Common myeloid progenitor, CD34-positive (primary cell): ENCODE measurements at regions of chr20 and their contacts with region 1.

Region 1: DNA sequence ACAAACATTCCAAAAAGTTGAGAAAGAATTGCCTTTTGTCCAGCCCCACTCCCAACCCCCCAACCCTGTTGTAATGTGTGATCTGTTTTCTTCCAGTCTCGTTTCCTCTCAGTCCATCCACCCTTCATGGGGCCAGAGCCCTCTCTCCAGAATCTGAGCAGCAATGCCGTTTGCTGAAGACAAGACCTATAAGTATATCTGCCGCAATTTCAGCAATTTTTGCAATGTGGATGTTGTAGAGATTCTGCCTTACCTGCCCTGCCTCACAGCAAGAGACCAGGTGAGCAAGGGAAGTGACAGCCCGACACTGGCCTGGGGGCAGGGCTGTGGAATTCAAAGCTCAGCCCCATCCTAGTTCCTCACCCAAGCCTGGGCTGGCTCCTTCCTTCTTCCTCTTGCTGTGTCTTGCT is 7.8 kb downstream of the MAVS start:
- DNase-seq: no peak
- H3K4me3 ChIP-seq: no peak overlapping the region
- H3K27ac ChIP-seq: no peak overlapping the region
- H3K4me1 ChIP-seq: peaks cover 0 to 4% (median 0%) of the 10 kb centered on the region in 4 experiments
- H3K27me3 ChIP-seq: no peaks in the 10 kb centered on the region

Region 2: DNA sequence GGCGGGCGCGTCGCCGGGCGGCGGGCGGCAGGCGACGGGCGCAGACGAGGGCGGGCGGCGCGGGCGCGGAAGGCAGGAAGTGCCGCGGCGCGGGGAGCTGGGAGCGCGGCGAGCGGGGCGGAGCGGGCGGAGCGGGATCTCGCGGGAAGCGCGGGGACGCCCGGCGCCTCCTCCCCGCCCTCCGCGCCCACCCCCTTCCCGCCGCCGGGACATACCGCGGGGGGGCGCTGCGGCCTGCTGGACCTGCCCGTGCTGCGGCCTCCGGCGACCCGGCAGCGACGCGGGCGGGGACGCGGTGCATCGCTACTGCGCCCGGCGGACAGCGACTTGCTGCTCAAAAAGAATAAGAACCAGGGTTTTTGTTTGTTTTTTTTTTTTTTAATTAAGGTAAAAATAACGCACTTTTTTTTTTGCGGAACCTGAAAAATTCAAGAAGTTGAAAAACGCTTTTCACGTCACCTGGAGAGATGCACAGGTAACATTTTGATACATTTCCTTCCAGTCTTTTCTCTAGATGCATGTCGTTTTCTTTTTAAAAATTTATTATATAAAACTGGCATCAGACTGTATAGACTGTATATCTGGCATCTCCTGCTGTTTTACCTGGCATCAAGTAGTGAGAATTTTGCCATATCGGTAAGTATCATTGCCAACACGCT is 67.7 kb before region 1 on chr20 and contains the start of gene CENPB:
- CTCF ChIA-PET with region 1: interaction called, 21 read pairs
- POLR2A ChIA-PET with region 1: interaction called, 3 read pairs
- DNase-seq: peak; percentile 87 to 93 (median 93)
- H3K4me3 ChIP-seq: peak within 1 kb of the TSS; percentile 38 to 83 (median 70)
- H3K27ac ChIP-seq: peak within 1 kb of the TSS in 1 of 2 experiments; percentile 54
- H3K4me1 ChIP-seq: peaks cover 7 to 27% (median 22%) of the 10 kb centered on the region in 4 experiments
- H3K27me3 ChIP-seq: no peaks in the 10 kb centered on the region

Region 3: DNA sequence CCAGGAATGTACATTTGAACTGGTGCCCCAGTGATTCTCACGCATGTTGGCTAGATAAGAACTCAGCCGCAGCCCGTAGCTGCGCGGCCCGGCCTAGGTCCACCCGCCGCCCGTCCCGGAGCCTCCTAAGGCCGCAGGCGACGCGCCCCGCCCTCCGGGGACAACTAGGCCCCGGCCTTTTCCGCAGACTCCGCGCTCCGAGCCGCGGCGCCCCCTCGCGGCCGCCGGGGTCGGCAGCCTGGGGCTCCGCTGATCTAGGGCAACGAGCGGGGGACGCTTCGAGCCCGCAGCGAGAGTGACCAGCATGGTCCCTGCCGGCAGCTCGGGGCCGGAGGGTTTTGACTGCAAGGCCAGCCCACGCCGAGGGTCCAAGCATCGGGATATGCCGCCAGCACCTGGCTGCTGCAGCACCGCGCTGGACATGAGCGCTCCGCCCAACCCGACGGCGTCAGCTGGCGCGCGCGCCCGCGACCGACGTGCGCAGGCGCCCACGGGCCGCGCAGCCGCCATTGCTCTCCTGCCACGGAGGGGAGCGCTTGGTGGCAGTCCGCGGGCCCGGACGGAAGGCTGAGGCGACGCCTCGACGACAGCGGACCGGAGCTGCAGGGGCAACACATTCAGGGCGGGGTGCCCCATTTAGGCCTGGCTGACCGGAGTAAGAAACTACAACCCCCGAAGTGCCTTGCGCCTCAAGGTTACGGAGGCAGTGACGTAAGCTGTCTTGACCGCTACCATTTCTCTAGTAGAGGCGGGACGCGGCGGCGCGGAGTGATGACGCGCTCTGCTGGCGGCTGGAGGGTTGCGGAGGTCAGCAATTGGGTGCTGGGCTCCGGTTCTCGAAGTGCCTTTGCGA is 34.2 kb before region 1 on chr20 and contains the start of gene AP5S1:
- CTCF ChIA-PET with region 1: interaction called, 13 read pairs
- POLR2A ChIA-PET with region 1: interaction called, 3 read pairs
- DNase-seq: peak; percentile 94 to 95 (median 95)
- H3K4me3 ChIP-seq: peak within 1 kb of the TSS; percentile 88 to 96 (median 92)
- H3K27ac ChIP-seq: peak within 1 kb of the TSS; percentile 96 to 99
- H3K4me1 ChIP-seq: peaks cover 3 to 28% (median 18%) of the 10 kb centered on the region in 4 experiments
- H3K27me3 ChIP-seq: no peaks in the 10 kb centered on the region

Region 4: DNA sequence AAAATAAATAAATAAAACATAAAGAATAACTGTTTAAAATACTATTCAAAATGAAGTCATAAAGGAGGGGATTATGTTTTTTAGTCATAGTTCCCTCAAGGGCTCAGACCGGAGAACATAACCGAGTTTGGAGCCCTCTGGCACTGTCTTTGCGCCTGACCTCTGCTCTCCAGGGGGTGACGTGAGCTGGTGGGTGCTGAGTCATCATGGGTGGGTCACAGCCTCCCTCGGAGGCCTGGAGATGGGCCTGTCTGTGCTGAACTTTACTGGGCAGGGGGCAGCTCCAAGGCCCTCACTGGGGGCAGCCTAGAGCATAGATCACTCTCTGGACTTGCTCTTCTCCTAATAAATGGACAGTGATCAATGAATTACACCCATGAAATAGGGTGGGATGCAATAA is 11.0 kb before region 1 on chr20:
- CTCF ChIA-PET with region 1: interaction called, 24 read pairs
- POLR2A ChIA-PET with region 1: no interaction called
- DNase-seq: peak; percentile 34 to 66 (median 50)
- H3K4me3 ChIP-seq: no peak overlapping the region
- H3K27ac ChIP-seq: no peak overlapping the region
- H3K4me1 ChIP-seq: peaks cover 7 to 59% (median 42%) of the 10 kb centered on the region in 4 experiments
- H3K27me3 ChIP-seq: no peaks in the 10 kb centered on the region

Region 5: GRCh38 chr20:3867815-3868214 is 13.3 kb after region 1 on chr20:
- CTCF ChIA-PET with region 1: interaction called, 11 read pairs
- POLR2A ChIA-PET with region 1: interaction called, 4 read pairs
- DNase-seq: no peak
- H3K4me3 ChIP-seq: no peak overlapping the region
- H3K27ac ChIP-seq: no peak overlapping the region
- H3K4me1 ChIP-seq: no peaks in the 10 kb centered on the region
- H3K27me3 ChIP-seq: no peaks in the 10 kb centered on the region

Region 6: GRCh38 chr20:3911956-3912355 is 57.5 kb after region 1 on chr20:
- CTCF ChIA-PET with region 1: no interaction called
- POLR2A ChIA-PET with region 1: no interaction called
- DNase-seq: no peak
- H3K4me3 ChIP-seq: no peak overlapping the region
- H3K27ac ChIP-seq: no peak overlapping the region
- H3K4me1 ChIP-seq: peaks cover 0 to 6% (median 1%) of the 10 kb centered on the region in 4 experiments
- H3K27me3 ChIP-seq: no peaks in the 10 kb centered on the region